ENCODE measurements at regions of chr10 and their contacts with region 1.

Region 1: DNA sequence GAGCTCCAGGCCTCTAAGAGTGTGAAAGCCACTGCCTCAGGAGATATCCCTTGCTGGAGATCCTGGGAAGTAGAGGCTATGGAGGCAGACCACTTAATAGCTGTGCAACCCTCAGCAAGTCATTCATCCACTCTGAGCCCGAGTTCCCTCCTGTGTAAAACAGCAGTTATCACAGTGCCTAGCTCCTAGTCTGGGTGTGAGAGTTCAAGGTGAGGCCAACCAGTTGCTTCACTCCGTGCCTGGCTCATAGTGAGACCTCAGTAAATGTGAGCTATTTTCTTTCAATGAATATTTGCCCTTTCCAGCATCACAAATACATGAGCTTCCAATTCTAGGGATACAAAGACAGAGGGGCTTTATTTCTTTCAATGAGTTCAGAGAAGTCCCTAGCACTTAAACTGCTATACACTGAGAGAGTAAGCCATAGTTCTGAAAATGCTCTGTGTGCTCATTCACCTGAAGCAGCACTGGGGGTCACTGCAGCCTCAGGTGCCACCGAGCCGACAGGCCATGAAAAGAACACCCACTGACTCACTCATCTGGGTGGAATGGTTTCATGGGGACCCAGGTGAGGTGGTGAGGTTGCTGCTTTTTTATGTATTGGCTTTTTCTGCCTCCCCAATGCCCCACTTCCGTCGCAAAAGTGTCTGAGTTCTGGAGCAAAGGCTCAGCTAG is 259.8 kb downstream of the KCNMA1 start:
- DNase-seq: no peak
- H3K4me3 ChIP-seq: no peak overlapping the region
- H3K27ac ChIP-seq: peak overlapping the region; percentile 36 to 89 (median 84)
- H3K4me1 ChIP-seq: peaks cover under 1 to 56% (median 37%) of the 10 kb centered on the region in 4 donors
- H3K27me3 ChIP-seq: no peaks in the 10 kb centered on the region
- CTCF ChIP-seq: no peak
- EP300 ChIP-seq: no peak
- POLR2A ChIP-seq: no peak

Region 2: GRCh38 chr10:77247031-77247990 is 130.5 kb before region 1 on chr10:
- intact Hi-C with region 1: loop called (anchors 10 kb)
- DNase-seq: no peak
- H3K4me3 ChIP-seq: no peak overlapping the region
- H3K27ac ChIP-seq: peak overlapping the region; percentile 78 to 91 (median 86)
- H3K4me1 ChIP-seq: peaks cover 0 to 97% (median 76%) of the 10 kb centered on the region in 4 donors
- H3K27me3 ChIP-seq: no peaks in the 10 kb centered on the region
- CTCF ChIP-seq: no peak
- EP300 ChIP-seq: peak in 1 of 4 donors; percentile 32
- POLR2A ChIP-seq: no peak

Region 3: GRCh38 chr10:77458986-77459590 is 81.3 kb after region 1 on chr10:
- intact Hi-C with region 1: no loop called
- DNase-seq: no peak
- H3K4me3 ChIP-seq: no peak overlapping the region
- H3K27ac ChIP-seq: peak overlapping the region in 3 of 4 donors; percentile 6 to 67 (median 65)
- H3K4me1 ChIP-seq: peaks cover 0 to 51% (median 37%) of the 10 kb centered on the region in 4 donors
- H3K27me3 ChIP-seq: no peaks in the 10 kb centered on the region
- CTCF ChIP-seq: no peak
- EP300 ChIP-seq: no peak
- POLR2A ChIP-seq: no peak

Measured in sigmoid colon (tissue), 7 donors.